ENCODE measurements at regions of chr19 and their contacts with region 1.

Region 1: GRCh38 chr19:4065430-4066175 is 1.1 kb downstream of the ZBTB7A start:
- DNase-seq: peak; percentile 99
- ATAC-seq: peak; percentile 76
- H3K4me3 Mint-ChIP-seq: peak overlapping the region; percentile 70
- H3K27ac Mint-ChIP-seq: no peak overlapping the region
- H3K4me1 Mint-ChIP-seq: peaks cover 50% of the 10 kb centered on the region
- H3K27me3 Mint-ChIP-seq: no peaks in the 10 kb centered on the region
- CTCF ChIP-seq: no peak

Region 2: GRCh38 chr19:3557461-3558248 is 507.9 kb before region 1 on chr19 and contains the start of gene MFSD12:
- CTCF ChIA-PET with region 1: no interaction called
- POLR2A ChIA-PET with region 1: no interaction called
- intact Hi-C with region 1: loop called (anchors 10 kb)
- DNase-seq: peak; percentile 94
- ATAC-seq: peak; percentile 86
- H3K4me3 Mint-ChIP-seq: peak within 1 kb of the TSS; percentile 89
- H3K27ac Mint-ChIP-seq: peak within 1 kb of the TSS; percentile 86
- H3K4me1 Mint-ChIP-seq: peaks cover 57% of the 10 kb centered on the region
- H3K27me3 Mint-ChIP-seq: no peaks in the 10 kb centered on the region
- CTCF ChIP-seq: no peak
- total RNA-seq, gene MFSD12: 59.2 and 76.9 TPM in 2 replicates

Region 3: GRCh38 chr19:4077882-4078614 is 12.4 kb after region 1 on chr19:
- CTCF ChIA-PET with region 1: no interaction called
- POLR2A ChIA-PET with region 1: interaction called, 29 read pairs
- intact Hi-C with region 1: loop called (anchors 1 kb)
- DNase-seq: peak; percentile 52
- ATAC-seq: peak; percentile 88
- H3K4me3 Mint-ChIP-seq: peak overlapping the region; percentile 88
- H3K27ac Mint-ChIP-seq: peak overlapping the region; percentile 90
- H3K4me1 Mint-ChIP-seq: peaks cover 19% of the 10 kb centered on the region
- H3K27me3 Mint-ChIP-seq: no peaks in the 10 kb centered on the region
- CTCF ChIP-seq: no peak

Region 4: DNA sequence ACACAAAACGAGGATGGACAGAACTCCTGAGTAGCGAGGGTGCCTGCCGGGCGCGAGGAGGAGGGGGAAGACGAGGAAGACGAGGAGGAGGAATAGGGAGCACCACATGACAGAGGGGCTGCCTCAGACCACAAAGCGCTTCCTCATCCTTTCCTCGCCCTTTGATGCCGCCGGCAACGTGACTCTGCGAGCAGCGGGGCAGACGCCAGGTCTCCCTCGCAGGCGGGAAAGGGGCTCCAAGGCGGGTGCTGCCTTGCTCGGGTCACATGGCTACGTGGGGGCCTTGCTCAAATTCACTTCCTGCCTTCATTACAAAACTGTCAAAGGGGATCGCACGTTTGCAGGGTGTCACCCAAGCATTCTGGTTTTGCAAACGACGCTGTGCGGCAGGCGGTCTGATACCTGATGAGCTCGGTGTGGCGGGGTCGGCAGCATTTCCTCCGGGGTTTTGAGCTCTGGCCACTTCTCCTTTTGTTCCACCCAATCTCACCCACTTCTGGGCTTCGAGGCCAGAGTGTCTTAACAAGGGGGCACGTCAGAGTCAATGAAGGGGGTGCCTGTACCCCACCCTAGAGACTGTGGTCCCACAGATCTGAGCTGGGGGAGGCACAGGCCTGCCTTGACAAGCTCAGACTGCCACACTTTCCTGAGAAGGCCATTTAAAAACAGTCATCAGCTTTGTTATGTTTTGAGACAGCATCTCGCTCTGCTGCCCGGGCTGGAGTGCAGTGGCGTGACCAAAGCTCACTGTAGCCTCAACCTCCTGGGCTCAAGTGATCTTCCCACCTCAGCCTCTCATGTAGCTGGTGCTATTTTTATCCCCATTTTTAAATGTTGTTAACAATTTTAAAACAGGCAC is 43.4 kb after region 1 on chr19:
- CTCF ChIA-PET with region 1: interaction called, 4 read pairs
- POLR2A ChIA-PET with region 1: interaction called, 31 read pairs
- intact Hi-C with region 1: loop called (anchors 1 kb)
- DNase-seq: peak; percentile 70
- ATAC-seq: peak; percentile 87
- H3K4me3 Mint-ChIP-seq: peak overlapping the region; percentile 76
- H3K27ac Mint-ChIP-seq: peak overlapping the region; percentile 99
- H3K4me1 Mint-ChIP-seq: peaks cover 64% of the 10 kb centered on the region
- H3K27me3 Mint-ChIP-seq: no peaks in the 10 kb centered on the region
- CTCF ChIP-seq: no peak

Region 5: DNA sequence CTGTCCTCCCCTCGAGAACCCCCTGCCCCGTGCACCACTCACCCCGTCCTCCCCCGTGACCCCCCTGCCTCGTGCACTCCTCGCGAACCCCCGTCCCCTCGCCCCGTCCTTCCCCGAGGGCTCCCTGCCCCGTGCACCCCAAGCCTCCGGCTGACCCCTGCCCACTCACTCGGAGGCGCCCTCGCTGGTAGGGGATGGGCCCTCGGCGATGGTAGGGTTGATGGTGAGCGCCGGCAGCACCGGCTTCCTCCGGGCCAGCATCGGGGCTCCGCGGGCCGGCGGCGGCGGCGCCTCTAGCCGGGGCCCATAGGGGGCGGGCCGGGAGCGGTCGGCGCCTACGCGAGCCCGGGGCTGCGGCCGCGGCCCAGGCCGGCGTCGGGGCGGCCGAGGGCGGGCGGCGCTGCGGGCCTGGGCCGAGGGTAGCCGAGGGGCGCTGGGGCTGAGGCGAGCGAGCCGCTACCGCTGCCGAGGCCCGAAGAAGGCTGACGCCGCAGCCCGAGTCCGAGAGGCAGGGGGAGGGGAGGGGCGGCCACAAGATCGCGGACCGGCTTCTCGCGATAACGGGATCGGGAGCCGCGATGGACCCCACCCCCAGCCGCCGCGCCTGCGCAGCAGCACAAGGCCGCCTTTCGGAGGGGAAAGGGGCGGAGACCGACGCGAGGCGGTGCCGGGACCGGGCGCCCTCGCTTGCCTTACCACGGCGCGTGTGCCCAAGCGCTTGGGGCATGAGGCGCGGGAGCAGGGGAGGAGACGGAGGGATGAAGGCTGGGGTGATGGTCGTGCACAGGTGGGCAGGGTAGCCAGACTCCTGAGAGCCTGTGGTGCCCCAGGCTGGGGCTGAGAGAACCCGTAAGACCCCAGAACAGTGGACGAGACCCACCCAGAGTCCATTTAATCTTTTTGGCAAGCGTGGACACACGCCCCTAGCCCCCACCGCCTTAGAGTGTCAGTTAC is 58.3 kb after region 1 on chr19 and contains the start of gene MAP2K2:
- CTCF ChIA-PET with region 1: no interaction called
- POLR2A ChIA-PET with region 1: interaction called, 3 read pairs
- intact Hi-C with region 1: loop called (anchors 1 kb)
- DNase-seq: peak; percentile 97
- ATAC-seq: peak; percentile 96
- H3K4me3 Mint-ChIP-seq: peak within 1 kb of the TSS; percentile 85
- H3K27ac Mint-ChIP-seq: peak within 1 kb of the TSS; percentile 78
- H3K4me1 Mint-ChIP-seq: peaks cover 24% of the 10 kb centered on the region
- H3K27me3 Mint-ChIP-seq: no peaks in the 10 kb centered on the region
- CTCF ChIP-seq: no peak
- total RNA-seq, gene MAP2K2: 126 TPM in 2 replicates

Region 6: GRCh38 chr19:4182084-4182810 is 116.6 kb after region 1 on chr19 and contains the starts of genes ANKRD24 and SIRT6:
- CTCF ChIA-PET with region 1: no interaction called
- POLR2A ChIA-PET with region 1: no interaction called
- intact Hi-C with region 1: loop called (anchors 1 kb)
- DNase-seq: peak; percentile 96
- ATAC-seq: peak; percentile 84
- H3K4me3 Mint-ChIP-seq: peak within 1 kb of the TSS; percentile 97
- H3K27ac Mint-ChIP-seq: peak within 1 kb of the TSS; percentile 94
- H3K4me1 Mint-ChIP-seq: peaks cover 35% of the 10 kb centered on the region
- H3K27me3 Mint-ChIP-seq: no peaks in the 10 kb centered on the region
- CTCF ChIP-seq: no peak
- total RNA-seq, gene ANKRD24: 0.42 and 0.49 TPM in 2 replicates
- total RNA-seq, gene SIRT6: 34.1 and 36.8 TPM in 2 replicates

Region 7: GRCh38 chr19:4471403-4472173 is 406.0 kb after region 1 on chr19:
- CTCF ChIA-PET with region 1: no interaction called
- POLR2A ChIA-PET with region 1: no interaction called
- intact Hi-C with region 1: loop called (anchors 5 kb)
- DNase-seq: peak; percentile 83
- ATAC-seq: peak; percentile 86
- H3K4me3 Mint-ChIP-seq: no peak overlapping the region
- H3K27ac Mint-ChIP-seq: no peak overlapping the region
- H3K4me1 Mint-ChIP-seq: peaks cover 22% of the 10 kb centered on the region
- H3K27me3 Mint-ChIP-seq: no peaks in the 10 kb centered on the region
- CTCF ChIP-seq: no peak

Measured in activated B cell treated with CpG ODN at 0.5 μM for 24 hours (primary cell).